ENCODE measurements at regions of chr11 and their contacts with region 1.

Region 1: DNA sequence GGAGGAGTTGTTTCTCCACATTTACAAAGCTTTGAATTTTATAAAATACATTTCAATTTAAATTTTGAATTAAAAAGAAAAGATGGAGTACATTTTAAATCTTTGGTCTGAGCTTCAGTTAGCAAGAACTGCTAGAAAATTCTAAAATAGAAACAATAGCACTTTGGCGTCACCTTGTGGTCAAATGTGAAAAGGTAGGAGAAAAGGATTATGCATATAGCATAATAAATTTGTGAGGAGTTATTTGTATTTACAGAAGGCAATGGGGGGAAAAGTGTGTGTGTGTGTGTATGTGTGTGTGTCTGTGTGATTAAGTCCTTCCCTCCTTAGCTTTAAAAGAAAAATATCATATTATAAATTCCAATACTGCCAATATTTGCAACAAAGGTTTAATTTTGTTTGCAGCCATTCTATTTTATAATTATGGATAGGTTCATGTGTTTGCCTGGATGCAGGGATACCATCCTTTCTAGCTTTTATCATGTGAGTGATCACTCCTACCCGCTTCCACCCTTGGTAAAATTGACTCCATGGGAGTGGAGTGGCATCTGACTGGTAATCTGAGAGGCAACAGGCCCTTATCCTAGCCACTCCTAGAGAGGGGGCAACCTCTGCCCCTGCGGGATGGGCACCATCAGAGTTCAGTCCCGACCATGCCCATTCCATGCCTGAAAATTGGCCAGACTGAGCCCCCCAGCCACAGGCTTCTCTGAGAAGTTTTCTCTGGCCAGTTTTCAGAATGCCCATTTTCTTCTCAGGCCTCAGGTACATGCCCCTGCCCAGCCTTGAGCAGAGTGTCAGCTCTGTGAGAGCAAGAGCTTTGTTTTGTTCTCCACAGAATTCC is 13.6 kb upstream of the LGR4 start:
- DNase-seq: peak; percentile 42
- ATAC-seq: no peak
- H3K4me3 Mint-ChIP-seq: no peak overlapping the region
- H3K27ac Mint-ChIP-seq: no peak overlapping the region
- H3K4me1 Mint-ChIP-seq: no peaks in the 10 kb centered on the region
- H3K27me3 Mint-ChIP-seq: no peaks in the 10 kb centered on the region

Region 2: GRCh38 chr11:26297189-26297975 is 1188.8 kb before region 1 on chr11:
- CTCF ChIA-PET with region 1: no interaction called
- POLR2A ChIA-PET with region 1: no interaction called
- intact Hi-C with region 1: loop called in 1 of 2 experiments (anchors 5 kb)
- DNase-seq: peak; percentile 6
- ATAC-seq: no peak
- H3K4me3 Mint-ChIP-seq: no peak overlapping the region
- H3K27ac Mint-ChIP-seq: no peak overlapping the region
- H3K4me1 Mint-ChIP-seq: no peaks in the 10 kb centered on the region
- H3K27me3 Mint-ChIP-seq: no peaks in the 10 kb centered on the region

Region 3: GRCh38 chr11:27183672-27184457 is 302.3 kb before region 1 on chr11:
- CTCF ChIA-PET with region 1: interaction called, 70 read pairs
- POLR2A ChIA-PET with region 1: no interaction called
- intact Hi-C with region 1: loop called (anchors 1 kb)
- DNase-seq: peak; percentile 66
- ATAC-seq: no peak
- H3K4me3 Mint-ChIP-seq: no peak overlapping the region
- H3K27ac Mint-ChIP-seq: no peak overlapping the region
- H3K4me1 Mint-ChIP-seq: no peaks in the 10 kb centered on the region
- H3K27me3 Mint-ChIP-seq: peaks cover 21% of the 10 kb centered on the region

Region 4: DNA sequence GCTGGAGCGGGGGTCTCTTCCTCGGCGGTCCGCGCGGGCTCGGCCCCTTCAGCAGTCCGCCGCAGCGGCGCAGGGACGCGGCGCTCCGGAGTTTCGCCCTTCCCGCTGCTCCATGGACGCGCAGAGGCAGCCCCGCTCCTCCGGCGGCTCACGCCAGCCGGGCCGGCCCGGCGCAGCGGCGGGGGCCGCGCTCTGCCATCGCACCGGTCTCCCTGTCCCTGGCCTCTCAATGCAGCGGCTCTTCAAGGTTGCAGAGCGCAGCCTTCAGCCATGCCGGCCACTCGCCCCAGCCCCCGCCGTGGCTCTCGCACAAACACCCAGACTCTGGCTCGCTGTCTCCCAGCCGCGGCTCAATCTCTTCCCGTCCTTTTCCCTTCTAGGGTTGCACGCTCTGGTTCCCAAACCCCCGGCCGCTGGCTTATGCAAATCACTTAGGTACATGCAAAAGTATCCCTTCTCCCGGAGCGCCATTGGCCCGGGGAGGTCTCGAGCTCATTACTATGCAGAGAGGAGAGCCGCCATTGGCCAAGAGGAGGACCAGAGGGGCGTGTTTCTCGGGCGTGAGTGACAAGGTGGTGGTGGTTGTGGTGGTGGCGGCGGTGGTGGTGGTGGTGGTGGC is 13.6 kb before region 1 on chr11 and contains the start of gene LGR4:
- CTCF ChIA-PET with region 1: interaction called, 33 read pairs
- POLR2A ChIA-PET with region 1: no interaction called
- intact Hi-C with region 1: no loop called
- DNase-seq: peak; percentile 80
- ATAC-seq: peak; percentile 90
- H3K4me3 Mint-ChIP-seq: peak within 1 kb of the TSS; percentile 89
- H3K27ac Mint-ChIP-seq: peak within 1 kb of the TSS; percentile 67
- H3K4me1 Mint-ChIP-seq: peaks cover 16% of the 10 kb centered on the region
- H3K27me3 Mint-ChIP-seq: peaks cover 26% of the 10 kb centered on the region
- total RNA-seq, gene LGR4: 0.19 to 0.21 TPM